Activated B cell treated with CpG ODN at 0.5 μM for 24 hours (primary cell): ENCODE measurements at regions of chr6 and their contacts with region 1.

Region 1: GRCh38 chr6:87589693-87590549 is at the starts of genes ORC3 and RARS2:
- DNase-seq: peak; percentile 90
- ATAC-seq: peak; percentile 99
- H3K4me3 Mint-ChIP-seq: peak within 1 kb of the TSS; percentile 97
- H3K27ac Mint-ChIP-seq: peak within 1 kb of the TSS; percentile 88
- H3K4me1 Mint-ChIP-seq: peaks cover 50% of the 10 kb centered on the region
- H3K27me3 Mint-ChIP-seq: no peaks in the 10 kb centered on the region
- CTCF ChIP-seq: no peak
- total RNA-seq, gene ORC3: 24.6 and 27.7 TPM in 2 replicates
- total RNA-seq, gene RARS2: 24.8 and 27.0 TPM in 2 replicates

Region 2: GRCh38 chr6:87407901-87408720 is 181.8 kb before region 1 on chr6 and contains the start of gene CFAP206:
- CTCF ChIA-PET with region 1: no interaction called
- POLR2A ChIA-PET with region 1: interaction called, 7 read pairs
- intact Hi-C with region 1: loop called (anchors 2 kb)
- DNase-seq: peak; percentile 80
- ATAC-seq: peak; percentile 80
- H3K4me3 Mint-ChIP-seq: peak within 1 kb of the TSS; percentile 87
- H3K27ac Mint-ChIP-seq: peak within 1 kb of the TSS; percentile 79
- H3K4me1 Mint-ChIP-seq: peaks cover 9% of the 10 kb centered on the region
- H3K27me3 Mint-ChIP-seq: peaks cover 8% of the 10 kb centered on the region
- CTCF ChIP-seq: no peak
- total RNA-seq, gene CFAP206: 0.09 TPM in 1 of 2 replicates, not detected in the other

Region 3: DNA sequence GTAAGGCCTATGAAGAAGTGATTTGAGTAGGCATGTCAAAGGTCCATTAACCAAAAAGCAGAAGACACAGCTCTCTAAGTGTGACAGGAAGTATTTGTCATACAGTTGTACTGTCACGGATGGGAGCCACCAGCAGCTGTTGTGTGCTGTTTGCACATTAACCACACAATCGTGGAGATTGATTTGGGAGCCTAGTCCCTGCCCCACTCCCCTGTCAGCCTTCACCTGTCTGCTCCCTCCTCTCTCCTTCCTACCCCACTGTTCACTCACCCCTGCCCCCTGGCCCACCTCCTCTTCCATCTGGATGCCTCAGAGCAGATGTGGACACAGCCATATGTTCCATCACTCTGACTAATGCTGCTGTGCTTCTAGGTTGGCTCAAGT is 333.0 kb after region 1 on chr6:
- CTCF ChIA-PET with region 1: no interaction called
- POLR2A ChIA-PET with region 1: interaction called, 3 read pairs
- intact Hi-C with region 1: loop called (anchors 5 kb)
- DNase-seq: peak; percentile 39
- ATAC-seq: peak; percentile 81
- H3K4me3 Mint-ChIP-seq: peak overlapping the region; percentile 33
- H3K27ac Mint-ChIP-seq: peak overlapping the region; percentile 88
- H3K4me1 Mint-ChIP-seq: peaks cover 87% of the 10 kb centered on the region
- H3K27me3 Mint-ChIP-seq: no peaks in the 10 kb centered on the region
- CTCF ChIP-seq: no peak

Region 4: DNA sequence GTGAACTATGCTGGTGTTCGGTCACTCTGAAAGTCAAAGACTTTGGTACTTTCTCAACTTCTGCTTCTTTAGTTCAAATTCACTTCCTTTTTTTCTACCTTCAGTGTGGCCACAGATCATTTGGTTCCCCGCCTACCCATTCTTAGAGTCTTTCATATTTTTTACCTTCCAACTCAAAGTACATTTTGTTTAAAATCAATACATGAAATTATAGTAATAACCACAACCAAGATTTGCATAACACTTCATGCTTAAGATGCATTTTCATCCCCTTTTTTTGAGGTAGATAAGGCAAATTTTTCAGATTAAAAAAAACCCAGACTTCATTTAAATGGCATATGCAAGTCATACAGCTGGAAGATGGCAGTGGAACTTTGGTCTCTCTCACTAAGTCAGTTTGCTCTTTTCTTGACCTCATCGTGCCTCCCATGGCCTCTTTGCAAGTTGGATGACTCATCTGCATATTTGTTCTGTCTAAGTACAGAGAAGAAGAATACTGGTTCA is 588.1 kb after region 1 on chr6:
- CTCF ChIA-PET with region 1: no interaction called
- POLR2A ChIA-PET with region 1: no interaction called
- intact Hi-C with region 1: loop called (anchors 1 kb)
- DNase-seq: no peak
- ATAC-seq: peak; percentile 75
- H3K4me3 Mint-ChIP-seq: peak overlapping the region; percentile 36
- H3K27ac Mint-ChIP-seq: peak overlapping the region; percentile 77
- H3K4me1 Mint-ChIP-seq: peaks cover 54% of the 10 kb centered on the region
- H3K27me3 Mint-ChIP-seq: no peaks in the 10 kb centered on the region
- CTCF ChIP-seq: no peak